Endothelial cell of umbilical vein (primary cell): ENCODE measurements at regions of chr18 and their contacts with region 1.

Region 1: GRCh38 chr18:48790226-48790874 is 160.4 kb downstream of the SMAD7 start:
- DNase-seq: peak; percentile 98
- H3K4me3 ChIP-seq: no peak overlapping the region
- H3K27ac ChIP-seq: peak overlapping the region; percentile 62
- H3K4me1 ChIP-seq: peaks cover 15% of the 10 kb centered on the region
- H3K27me3 ChIP-seq: no peaks in the 10 kb centered on the region
- CTCF ChIP-seq: no peak
- POLR2A ChIP-seq: no peak

Region 2: GRCh38 chr18:48742706-48743475 is 47.5 kb before region 1 on chr18:
- CTCF ChIA-PET with region 1: no interaction called
- POLR2A ChIA-PET with region 1: no interaction called
- dilution Hi-C with region 1: no loop called
- intact Hi-C with region 1: no loop called
- DNase-seq: no peak
- H3K4me3 ChIP-seq: no peak overlapping the region
- H3K27ac ChIP-seq: no peak overlapping the region
- H3K4me1 ChIP-seq: no peaks in the 10 kb centered on the region
- H3K27me3 ChIP-seq: no peaks in the 10 kb centered on the region
- CTCF ChIP-seq: no peak
- POLR2A ChIP-seq: no peak

Region 3: GRCh38 chr18:48834413-48835031 is 44.2 kb after region 1 on chr18:
- CTCF ChIA-PET with region 1: interaction called, 3 read pairs
- POLR2A ChIA-PET with region 1: no interaction called
- dilution Hi-C with region 1: no loop called
- intact Hi-C with region 1: loop called (anchors 2 kb)
- DNase-seq: peak; percentile 90
- H3K4me3 ChIP-seq: no peak overlapping the region
- H3K27ac ChIP-seq: peak overlapping the region; percentile 30
- H3K4me1 ChIP-seq: peaks cover 36% of the 10 kb centered on the region
- H3K27me3 ChIP-seq: no peaks in the 10 kb centered on the region
- CTCF ChIP-seq: no peak
- POLR2A ChIP-seq: no peak